K562 (cell line): ENCODE measurements at regions of chr10 and their contacts with region 1.

Region 1: GRCh38 chr10:35635576-35635975 is 6.5 kb downstream of the FZD8 start:
- DNase-seq: peak; percentile 63 to 75 (median 74)
- ATAC-seq: peak; percentile 94
- H3K4me3 ChIP-seq: no peak overlapping the region
- H3K27ac ChIP-seq: no peak overlapping the region
- H3K4me1 ChIP-seq: peaks cover 0 to 9% of the 10 kb centered on the region in 2 experiments; a peak in 2 of 5 replicates
- H3K27me3 ChIP-seq: no peaks in the 10 kb centered on the region
- CTCF ChIP-seq: peak; percentile 63 to 90 (median 82)
- EP300 ChIP-seq: no peak
- POLR2A ChIP-seq: no peak
- RAD21 ChIP-seq: peak; percentile 87 to 96

Region 2: GRCh38 chr10:35433851-35434426 is 201.6 kb before region 1 on chr10:
- CTCF ChIA-PET with region 1: no interaction called
- POLR2A ChIA-PET with region 1: no interaction called
- in situ Hi-C with region 1: no loop called
- intact Hi-C with region 1: no loop called
- DNase-seq: no peak
- ATAC-seq: no peak; the same call in 2 of the 3 replicates
- H3K4me3 ChIP-seq: no peak overlapping the region
- H3K27ac ChIP-seq: no peak overlapping the region
- H3K4me1 ChIP-seq: peaks cover 0 to 6% of the 10 kb centered on the region in 2 experiments; a peak in 2 of 5 replicates
- H3K27me3 ChIP-seq: no peaks in the 10 kb centered on the region
- CTCF ChIP-seq: no peak
- EP300 ChIP-seq: no peak
- POLR2A ChIP-seq: no peak
- RAD21 ChIP-seq: no peak

Region 3: GRCh38 chr10:36725581-36726520 is 1090.3 kb after region 1 on chr10:
- CTCF ChIA-PET with region 1: no interaction called
- POLR2A ChIA-PET with region 1: no interaction called
- in situ Hi-C with region 1: no loop called
- intact Hi-C with region 1: loop called (anchors 5 kb)
- DNase-seq: peak in 1 of 4 experiments; percentile 5
- ATAC-seq: no peak
- H3K4me3 ChIP-seq: no peak overlapping the region
- H3K27ac ChIP-seq: no peak overlapping the region
- H3K4me1 ChIP-seq: no peaks in the 10 kb centered on the region
- H3K27me3 ChIP-seq: no peaks in the 10 kb centered on the region
- CTCF ChIP-seq: no peak
- EP300 ChIP-seq: no peak
- POLR2A ChIP-seq: no peak
- RAD21 ChIP-seq: no peak

Region 4: GRCh38 chr10:36880898-36881297 is 1245.3 kb after region 1 on chr10:
- CTCF ChIA-PET with region 1: interaction called, 3 read pairs
- POLR2A ChIA-PET with region 1: no interaction called
- in situ Hi-C with region 1: loop called (anchors 25 kb)
- intact Hi-C with region 1: loop called (anchors 2 kb)
- DNase-seq: peak in 1 of 4 experiments; percentile 12
- ATAC-seq: no peak
- H3K4me3 ChIP-seq: no peak overlapping the region
- H3K27ac ChIP-seq: no peak overlapping the region
- H3K4me1 ChIP-seq: no peaks in the 10 kb centered on the region
- H3K27me3 ChIP-seq: no peaks in the 10 kb centered on the region
- CTCF ChIP-seq: peak in 1 of 3 experiments; percentile 35; a peak in 3 of 6 replicates
- EP300 ChIP-seq: no peak
- POLR2A ChIP-seq: no peak
- RAD21 ChIP-seq: peak in 1 of 2 experiments; percentile 29; a peak in 1 of 4 replicates

Region 5: GRCh38 chr10:37478392-37478791 is 1842.8 kb after region 1 on chr10:
- CTCF ChIA-PET with region 1: no interaction called
- POLR2A ChIA-PET with region 1: no interaction called
- in situ Hi-C with region 1: loop called (anchors 10 kb)
- intact Hi-C with region 1: no loop called
- DNase-seq: no peak
- ATAC-seq: no peak
- H3K4me3 ChIP-seq: no peak overlapping the region
- H3K27ac ChIP-seq: no peak overlapping the region
- H3K4me1 ChIP-seq: no peaks in the 10 kb centered on the region
- H3K27me3 ChIP-seq: no peaks in the 10 kb centered on the region
- CTCF ChIP-seq: no peak
- EP300 ChIP-seq: no peak
- POLR2A ChIP-seq: no peak
- RAD21 ChIP-seq: no peak

Region 6: GRCh38 chr10:37495415-37495814 is 1859.8 kb after region 1 on chr10:
- CTCF ChIA-PET with region 1: no interaction called
- POLR2A ChIA-PET with region 1: no interaction called
- in situ Hi-C with region 1: no loop called
- intact Hi-C with region 1: loop called (anchors 10 kb)
- DNase-seq: no peak
- ATAC-seq: no peak
- H3K4me3 ChIP-seq: no peak overlapping the region
- H3K27ac ChIP-seq: no peak overlapping the region
- H3K4me1 ChIP-seq: no peaks in the 10 kb centered on the region
- H3K27me3 ChIP-seq: no peaks in the 10 kb centered on the region
- CTCF ChIP-seq: 0 out of 6 replicates have a peak, but pooled peaks of 2 of the 3 experiments have one; percentile 15 to 18
- EP300 ChIP-seq: no peak
- POLR2A ChIP-seq: no peak
- RAD21 ChIP-seq: 0 out of 4 replicates have a peak, but pooled peaks of 1 of the 2 experiments have one; percentile 21